Colonic mucosa (tissue), 4 donors: ENCODE measurements at regions of chr16 and their contacts with region 1.

Region 1: DNA sequence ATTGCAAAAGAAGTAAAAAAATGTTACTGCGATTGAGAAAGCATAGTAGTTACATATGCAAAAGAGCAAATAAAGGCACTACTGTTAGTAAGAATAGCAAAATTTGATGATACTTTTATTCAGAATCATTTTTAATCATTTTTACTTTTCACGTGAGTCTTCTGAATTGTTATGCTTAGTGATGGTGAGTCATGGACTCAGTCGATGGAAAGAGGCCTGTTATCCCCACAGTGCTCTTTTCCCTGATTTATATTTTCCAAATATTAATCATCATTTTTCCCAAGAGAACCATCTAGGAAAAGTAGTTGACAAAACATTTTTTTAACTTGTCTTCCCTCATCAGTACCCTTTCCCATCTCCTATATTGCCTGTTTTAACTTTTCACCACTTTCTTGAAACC is 181.1 kb downstream of the CHD9 start:
- DNase-seq: no peak
- H3K4me3 ChIP-seq: no peak overlapping the region
- H3K27ac ChIP-seq: no peak overlapping the region
- H3K4me1 ChIP-seq: no peaks in the 10 kb centered on the region
- H3K27me3 ChIP-seq: no peaks in the 10 kb centered on the region
- CTCF ChIP-seq: no peak

Region 2: GRCh38 chr16:53007095-53007494 is 228.8 kb before region 1 on chr16:
- intact Hi-C with region 1: no loop called
- DNase-seq: no peak
- H3K4me3 ChIP-seq: no peak overlapping the region
- H3K27ac ChIP-seq: no peak overlapping the region
- H3K4me1 ChIP-seq: no peaks in the 10 kb centered on the region
- H3K27me3 ChIP-seq: no peaks in the 10 kb centered on the region
- CTCF ChIP-seq: no peak

Region 3: DNA sequence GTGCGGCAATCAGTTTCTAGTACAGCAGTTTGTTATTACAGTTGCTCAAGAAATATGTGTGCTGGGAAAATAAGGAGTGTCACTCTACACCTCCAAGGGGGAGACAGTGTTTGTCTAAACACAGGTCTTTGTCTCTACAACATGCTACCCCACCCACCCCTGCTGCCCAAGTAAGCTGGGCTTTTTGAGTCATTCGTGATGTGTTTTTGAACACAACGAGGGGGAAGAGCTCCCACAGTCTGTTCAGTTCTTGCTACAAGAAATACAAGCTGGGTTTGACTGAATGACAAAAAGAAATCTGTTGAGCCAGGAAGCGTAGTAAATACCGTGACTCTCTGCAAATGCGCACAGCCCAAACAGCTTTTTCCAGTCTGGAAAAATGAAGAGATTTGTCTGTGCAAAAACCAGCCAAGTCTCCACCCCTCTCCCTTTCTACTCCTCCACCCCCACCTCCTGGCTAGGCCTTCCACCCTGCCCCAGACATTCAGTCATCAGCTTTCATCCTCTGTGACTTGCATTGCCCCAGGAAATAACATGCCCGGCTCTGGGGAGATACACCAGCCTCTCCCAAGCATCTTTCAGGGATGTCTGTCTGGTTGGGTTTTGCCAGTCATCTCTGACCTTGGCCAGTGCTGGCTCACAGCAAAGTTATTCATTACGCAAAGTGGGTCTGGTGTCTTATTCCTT is 155.4 kb before region 1 on chr16:
- intact Hi-C with region 1: no loop called
- DNase-seq: peak; percentile 35
- H3K4me3 ChIP-seq: no peak overlapping the region
- H3K27ac ChIP-seq: peak overlapping the region; percentile 41
- H3K4me1 ChIP-seq: no peaks in the 10 kb centered on the region
- H3K27me3 ChIP-seq: no peaks in the 10 kb centered on the region
- CTCF ChIP-seq: no peak

Region 4: GRCh38 chr16:53457670-53458069 is 221.8 kb after region 1 on chr16:
- intact Hi-C with region 1: loop called (anchors 10 kb)
- DNase-seq: peak; percentile 40
- H3K4me3 ChIP-seq: no peak overlapping the region
- H3K27ac ChIP-seq: peak overlapping the region; percentile 24
- H3K4me1 ChIP-seq: no peaks in the 10 kb centered on the region
- H3K27me3 ChIP-seq: no peaks in the 10 kb centered on the region
- CTCF ChIP-seq: no peak